Sigmoid colon (tissue), 7 donors: ENCODE measurements at regions of chr3 and their contacts with region 1.

Region 1: GRCh38 chr3:14124615-14125190 is at the starts of genes CHCHD4 and TMEM43:
- DNase-seq: peak; percentile 100
- H3K4me3 ChIP-seq: peak within 1 kb of the TSS; percentile 68 to 96 (median 87)
- H3K27ac ChIP-seq: peak within 1 kb of the TSS; percentile 86 to 97 (median 94)
- H3K4me1 ChIP-seq: peaks cover 0 to 49% (median 38%) of the 10 kb centered on the region in 4 donors
- H3K27me3 ChIP-seq: no peaks in the 10 kb centered on the region
- CTCF ChIP-seq: no peak
- EP300 ChIP-seq: peak in 1 of 4 donors; percentile 53
- POLR2A ChIP-seq: peak; percentile 62 to 71
- total RNA-seq, gene CHCHD4: 13.0 to 33.1 (median 26.3) TPM
- total RNA-seq, gene TMEM43: 68.0 to 88.3 (median 80.2) TPM

Region 2: GRCh38 chr3:13932578-13933295 is 192.0 kb before region 1 on chr3:
- intact Hi-C with region 1: no loop called
- DNase-seq: no peak
- H3K4me3 ChIP-seq: peak overlapping the region in 3 of 4 donors; percentile 28 to 43 (median 40)
- H3K27ac ChIP-seq: no peak overlapping the region
- H3K4me1 ChIP-seq: no peaks in the 10 kb centered on the region
- H3K27me3 ChIP-seq: peaks cover 0 to 14% (median 7%) of the 10 kb centered on the region in 3 donors
- CTCF ChIP-seq: no peak
- EP300 ChIP-seq: no peak
- POLR2A ChIP-seq: no peak

Region 3: GRCh38 chr3:14144423-14145075 is 19.8 kb after region 1 on chr3:
- intact Hi-C with region 1: loop called (anchors 1 kb)
- DNase-seq: peak; percentile 92
- H3K4me3 ChIP-seq: peak overlapping the region in 3 of 4 donors; percentile 7 to 24 (median 20)
- H3K27ac ChIP-seq: peak overlapping the region; percentile 81 to 92 (median 84)
- H3K4me1 ChIP-seq: peaks cover 0 to 54% (median 46%) of the 10 kb centered on the region in 4 donors
- H3K27me3 ChIP-seq: no peaks in the 10 kb centered on the region
- CTCF ChIP-seq: no peak
- EP300 ChIP-seq: peak in 3 of 4 donors; percentile 39 to 83 (median 47)
- POLR2A ChIP-seq: no peak

Region 4: DNA sequence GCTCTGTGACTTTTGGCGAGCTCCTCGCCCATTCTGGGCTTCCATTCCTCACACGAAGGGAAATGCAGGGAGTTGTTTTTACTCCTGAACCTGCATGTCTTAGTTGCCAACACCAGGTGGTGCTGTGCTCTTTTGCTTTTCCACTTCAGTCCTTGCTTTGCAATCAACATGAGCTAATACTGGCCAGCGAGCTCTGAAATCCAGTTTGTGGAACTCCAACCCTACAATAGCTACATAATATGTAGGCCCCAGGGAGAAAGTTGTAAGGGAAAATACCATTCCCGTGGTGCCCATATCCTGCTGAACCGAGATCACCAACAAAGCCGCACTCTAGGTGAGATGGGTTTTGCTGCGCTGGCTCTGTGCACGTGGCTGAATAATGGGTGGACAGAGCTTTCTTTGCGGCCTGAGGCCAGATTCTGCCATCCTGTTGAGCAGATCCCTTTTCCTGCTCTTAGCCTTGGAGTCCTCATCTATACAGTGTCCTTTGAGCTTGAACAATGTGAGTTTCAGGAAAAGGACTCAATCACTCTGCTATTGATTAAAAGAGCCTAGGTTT is 78.9 kb after region 1 on chr3:
- intact Hi-C with region 1: no loop called
- DNase-seq: peak; percentile 83
- H3K4me3 ChIP-seq: no peak overlapping the region
- H3K27ac ChIP-seq: peak overlapping the region in 1 of 4 donors; percentile 22
- H3K4me1 ChIP-seq: no peaks in the 10 kb centered on the region
- H3K27me3 ChIP-seq: no peaks in the 10 kb centered on the region
- CTCF ChIP-seq: peak; percentile 28 to 76 (median 68)
- EP300 ChIP-seq: no peak
- POLR2A ChIP-seq: no peak